CD4-positive, alpha-beta T cell (primary cell): ENCODE measurements at regions of chr5 and their contacts with region 1.

Region 1: GRCh38 chr5:52915176-52915875 is 73.8 kb upstream of the ITGA2 start:
- DNase-seq: peak; percentile 6 to 80 (median 30)
- ATAC-seq: peak; percentile 92
- H3K4me3 ChIP-seq: no peak overlapping the region
- H3K4me3 Mint-ChIP-seq: peak overlapping the region; percentile 17
- H3K27ac ChIP-seq: no peak overlapping the region
- H3K27ac Mint-ChIP-seq: no peak overlapping the region
- H3K4me1 ChIP-seq: no peaks in the 10 kb centered on the region
- H3K4me1 Mint-ChIP-seq: peaks cover 5% of the 10 kb centered on the region
- H3K27me3 ChIP-seq: no peaks in the 10 kb centered on the region
- H3K27me3 Mint-ChIP-seq: peaks cover 4% of the 10 kb centered on the region
- CTCF ChIP-seq: peak; percentile 87

Region 2: DNA sequence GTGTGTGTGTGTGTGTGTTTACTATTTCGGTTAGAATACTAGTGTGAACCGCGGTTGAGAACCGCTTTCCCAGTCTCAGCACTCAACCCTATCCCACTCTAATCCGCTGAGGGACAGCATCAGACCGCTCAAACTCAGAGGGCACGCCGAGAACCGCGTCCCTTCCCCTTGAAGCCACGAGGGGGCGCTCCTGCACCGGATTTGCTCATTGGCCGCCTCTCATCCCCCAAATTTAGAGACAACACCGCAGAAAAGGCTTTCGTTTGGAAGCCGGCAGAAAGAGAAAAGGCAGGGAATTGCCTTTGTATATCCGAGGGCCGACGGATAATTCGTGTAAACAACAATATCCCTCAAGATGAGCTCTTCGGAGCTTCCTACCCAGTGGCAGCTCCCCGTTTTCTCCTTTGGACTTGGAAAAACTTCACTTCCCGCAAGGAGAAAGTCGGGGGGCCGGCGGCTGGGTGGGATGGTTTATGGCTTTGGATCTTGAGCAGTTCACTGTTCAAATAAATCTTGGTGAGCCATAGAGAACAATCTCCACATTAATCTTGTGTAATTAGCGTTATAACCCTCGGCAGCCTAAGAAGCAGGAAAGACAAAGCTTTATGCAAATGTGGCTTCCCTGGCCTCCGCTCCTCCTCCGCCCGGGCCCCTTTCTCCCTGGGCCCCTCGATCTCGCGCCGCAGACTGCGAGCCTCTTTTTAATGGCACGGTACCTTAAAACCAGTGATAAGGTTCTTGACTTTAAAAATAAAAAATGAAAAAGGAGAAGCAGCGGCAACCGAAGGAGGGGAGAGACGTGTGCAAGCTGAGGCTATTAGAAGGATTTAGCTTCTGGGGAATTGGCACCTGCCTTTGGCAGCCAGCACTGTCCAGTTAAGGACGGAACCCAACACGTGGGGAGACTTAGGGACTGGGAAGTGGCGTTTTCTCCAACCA is 1952.1 kb before region 1 on chr5:
- CTCF ChIA-PET with region 1: no interaction called
- POLR2A ChIA-PET with region 1: no interaction called
- intact Hi-C with region 1: loop called in 1 of 2 experiments (anchors 5 kb)
- DNase-seq: peak in 13 of 14 experiments; percentile 23 to 74 (median 42)
- ATAC-seq: peak; percentile 61
- H3K4me3 ChIP-seq: peak overlapping the region; percentile 47
- H3K4me3 Mint-ChIP-seq: peak overlapping the region; percentile 75
- H3K27ac ChIP-seq: no peak overlapping the region
- H3K27ac Mint-ChIP-seq: no peak overlapping the region
- H3K4me1 ChIP-seq: peaks cover 41% of the 10 kb centered on the region
- H3K4me1 Mint-ChIP-seq: peaks cover 43% of the 10 kb centered on the region
- H3K27me3 ChIP-seq: peaks cover 49 to 60% of the 10 kb centered on the region in 2 experiments
- H3K27me3 Mint-ChIP-seq: peaks cover 90% of the 10 kb centered on the region
- CTCF ChIP-seq: peak; percentile 64

Region 3: DNA sequence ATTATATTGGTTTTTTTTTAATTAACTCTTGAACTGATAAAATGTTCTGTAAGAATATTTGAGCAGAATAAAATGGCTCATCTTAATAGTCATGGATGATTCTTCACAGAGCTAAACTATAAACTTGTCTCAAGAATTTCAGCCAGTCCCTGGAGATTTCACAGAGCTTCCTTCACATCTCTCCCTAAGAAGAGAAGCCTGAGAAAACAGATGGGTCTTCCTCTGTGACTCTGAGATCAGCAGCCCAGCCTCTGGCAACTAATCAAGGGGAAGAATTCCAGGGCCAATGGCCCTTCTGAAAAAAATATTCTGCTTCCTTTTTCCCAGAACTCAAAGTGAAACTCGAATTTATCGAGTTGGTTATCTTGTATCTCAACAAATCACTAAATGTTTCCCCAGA is 249.8 kb before region 1 on chr5:
- CTCF ChIA-PET with region 1: interaction called, 3 read pairs
- POLR2A ChIA-PET with region 1: no interaction called
- intact Hi-C with region 1: loop called (anchors 10 kb)
- DNase-seq: no peak
- ATAC-seq: no peak
- H3K4me3 ChIP-seq: no peak overlapping the region
- H3K4me3 Mint-ChIP-seq: no peak overlapping the region
- H3K27ac ChIP-seq: no peak overlapping the region
- H3K27ac Mint-ChIP-seq: no peak overlapping the region
- H3K4me1 ChIP-seq: no peaks in the 10 kb centered on the region
- H3K4me1 Mint-ChIP-seq: no peaks in the 10 kb centered on the region
- H3K27me3 ChIP-seq: no peaks in the 10 kb centered on the region
- H3K27me3 Mint-ChIP-seq: peaks cover 6% of the 10 kb centered on the region
- CTCF ChIP-seq: no peak

Region 4: GRCh38 chr5:52693280-52693679 is 222.0 kb before region 1 on chr5:
- CTCF ChIA-PET with region 1: interaction called, 4 read pairs
- POLR2A ChIA-PET with region 1: interaction called, 4 read pairs
- intact Hi-C with region 1: loop called (anchors 1 to 2 kb)
- DNase-seq: peak in 12 of 14 experiments; percentile 7 to 64 (median 15)
- ATAC-seq: no peak
- H3K4me3 ChIP-seq: no peak overlapping the region
- H3K4me3 Mint-ChIP-seq: no peak overlapping the region
- H3K27ac ChIP-seq: no peak overlapping the region
- H3K27ac Mint-ChIP-seq: no peak overlapping the region
- H3K4me1 ChIP-seq: peaks cover 2% of the 10 kb centered on the region
- H3K4me1 Mint-ChIP-seq: peaks cover 5% of the 10 kb centered on the region
- H3K27me3 ChIP-seq: no peaks in the 10 kb centered on the region
- H3K27me3 Mint-ChIP-seq: no peaks in the 10 kb centered on the region
- CTCF ChIP-seq: peak; percentile 45